Kidney (tissue), 22 donors: ENCODE measurements at regions of chr1 and their contacts with region 1.

Region 1: GRCh38 chr1:23539698-23540266 is 8.7 kb upstream of the E2F2 start:
- DNase-seq: peak; percentile 92 to 96 (median 95)
- H3K4me3 ChIP-seq: peak overlapping the region in 2 of 3 donors; percentile 30 to 42
- H3K27ac ChIP-seq: no peak overlapping the region
- H3K4me1 ChIP-seq: peaks cover 0 to 7% (median 3%) of the 10 kb centered on the region in 3 donors
- H3K27me3 ChIP-seq: no peaks in the 10 kb centered on the region
- CTCF ChIP-seq: peak; percentile 88

Region 2: GRCh38 chr1:23496490-23497181 is 43.1 kb before region 1 on chr1:
- intact Hi-C with region 1: loop called (anchors 5 kb)
- DNase-seq: no peak
- H3K4me3 ChIP-seq: no peak overlapping the region
- H3K27ac ChIP-seq: no peak overlapping the region
- H3K4me1 ChIP-seq: no peaks in the 10 kb centered on the region
- H3K27me3 ChIP-seq: no peaks in the 10 kb centered on the region
- CTCF ChIP-seq: no peak

Region 3: DNA sequence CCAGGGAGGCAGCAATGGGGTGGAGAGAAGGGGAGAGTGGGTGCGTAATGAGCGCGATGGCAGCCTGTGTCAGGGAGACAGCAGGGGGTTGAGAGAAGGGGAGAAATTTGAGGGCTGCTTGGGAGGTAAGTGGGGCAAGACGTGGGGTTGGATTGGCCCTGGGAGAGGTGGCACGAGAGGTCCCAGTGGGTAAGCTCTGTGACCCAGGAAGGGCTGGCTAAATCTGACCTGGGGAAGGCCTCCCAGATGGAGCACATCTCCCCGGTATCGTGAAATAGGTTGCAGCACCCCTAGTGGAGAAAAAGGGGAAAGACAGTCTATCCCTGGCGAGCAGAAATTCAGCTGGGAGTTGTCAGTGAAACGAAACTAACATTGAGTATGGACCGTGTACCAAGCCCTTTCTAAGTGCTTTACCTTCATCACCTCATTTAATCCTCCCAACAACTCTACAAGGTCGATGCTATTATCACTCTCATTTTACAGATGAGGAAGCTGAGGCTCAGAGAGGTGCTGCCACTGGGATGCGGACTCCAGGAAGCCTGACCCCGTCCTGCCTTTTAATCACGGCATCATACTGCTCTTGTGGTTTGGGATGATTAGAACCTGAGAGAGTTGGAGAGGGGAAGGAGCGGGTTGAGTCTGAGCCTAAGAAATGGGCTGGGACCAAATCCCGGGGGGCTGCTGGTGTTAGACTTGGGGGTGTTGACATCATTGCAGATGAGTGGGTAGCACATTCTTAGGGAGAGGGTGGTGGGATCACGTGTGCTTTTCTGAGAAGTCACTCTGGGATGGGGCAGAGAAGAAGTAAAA is 95.3 kb after region 1 on chr1:
- intact Hi-C with region 1: loop called (anchors 5 kb)
- DNase-seq: peak in 4 of 5 donors; percentile 69 to 89 (median 77)
- H3K4me3 ChIP-seq: peak overlapping the region; percentile 68 to 73 (median 70)
- H3K27ac ChIP-seq: peak overlapping the region; percentile 66 to 72
- H3K4me1 ChIP-seq: peaks cover 0 to 4% (median 2%) of the 10 kb centered on the region in 3 donors
- H3K27me3 ChIP-seq: no peaks in the 10 kb centered on the region
- CTCF ChIP-seq: peak; percentile 91